ENCODE measurements at regions of chr19 and their contacts with region 1.

Region 1: DNA sequence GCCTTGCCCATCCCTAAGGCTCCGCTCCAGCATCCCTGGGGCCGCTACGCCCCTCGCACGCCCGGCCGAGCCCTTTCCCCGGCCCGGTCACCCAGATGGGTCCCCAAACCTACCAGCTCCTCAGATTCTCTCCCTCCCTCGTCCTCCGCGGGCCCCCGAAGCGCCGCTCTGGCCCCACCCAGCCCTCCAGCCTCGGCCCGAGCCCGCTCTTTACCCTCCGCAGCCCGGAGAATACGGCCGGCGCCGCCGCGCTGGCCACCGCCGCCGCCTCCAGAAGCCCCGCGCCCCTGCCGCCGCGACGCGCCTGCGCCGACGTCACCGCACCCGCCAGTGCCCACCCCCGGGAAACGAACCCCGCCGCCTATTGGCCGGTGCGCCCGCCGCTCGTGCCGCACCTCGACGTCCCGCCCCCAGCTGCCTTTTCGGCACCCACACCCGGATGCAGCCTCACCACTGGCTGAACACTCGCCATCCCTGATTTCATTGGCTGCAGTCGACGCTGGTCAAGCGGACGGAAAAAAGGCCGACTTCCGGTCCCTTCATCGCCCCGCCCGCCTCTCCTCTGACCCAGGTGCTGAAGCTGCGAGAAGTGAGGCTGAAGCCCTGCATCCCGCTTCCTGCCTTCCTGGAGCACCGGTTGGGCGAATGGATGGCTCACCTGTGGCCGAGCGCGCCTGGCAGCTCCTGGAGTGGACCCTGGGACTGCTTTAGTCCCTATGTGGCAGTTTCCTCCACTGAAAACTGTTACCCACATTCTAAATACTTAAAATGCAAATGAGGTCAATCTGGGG is at the start of gene DAPK3:
- DNase-seq: peak; percentile 98
- H3K4me3 ChIP-seq: peak within 1 kb of the TSS; percentile 97
- H3K4me3 Mint-ChIP-seq: peak within 1 kb of the TSS; percentile 78
- H3K27ac Mint-ChIP-seq: peak within 1 kb of the TSS; percentile 79
- H3K4me1 ChIP-seq: peaks cover 28% of the 10 kb centered on the region
- H3K4me1 Mint-ChIP-seq: peaks cover 22% of the 10 kb centered on the region
- H3K27me3 ChIP-seq: no peaks in the 10 kb centered on the region
- H3K27me3 Mint-ChIP-seq: no peaks in the 10 kb centered on the region
- CTCF ChIP-seq: no peak
- total RNA-seq, gene DAPK3: 58.6 and 66.4 TPM in 2 replicates

Region 2: GRCh38 chr19:3762501-3763459 is 208.2 kb before region 1 on chr19 and contains the start of gene MRPL54:
- CTCF ChIA-PET with region 1: no interaction called
- POLR2A ChIA-PET with region 1: interaction called, 20 read pairs
- intact Hi-C with region 1: no loop called
- DNase-seq: peak; percentile 98
- H3K4me3 ChIP-seq: peak within 1 kb of the TSS; percentile 68
- H3K4me3 Mint-ChIP-seq: peak within 1 kb of the TSS; percentile 96
- H3K27ac Mint-ChIP-seq: peak within 1 kb of the TSS; percentile 99
- H3K4me1 ChIP-seq: peaks cover 4% of the 10 kb centered on the region
- H3K4me1 Mint-ChIP-seq: peaks cover 8% of the 10 kb centered on the region
- H3K27me3 ChIP-seq: no peaks in the 10 kb centered on the region
- H3K27me3 Mint-ChIP-seq: no peaks in the 10 kb centered on the region
- CTCF ChIP-seq: no peak
- total RNA-seq, gene MRPL54: 46.4 and 54.5 TPM in 2 replicates

Region 3: DNA sequence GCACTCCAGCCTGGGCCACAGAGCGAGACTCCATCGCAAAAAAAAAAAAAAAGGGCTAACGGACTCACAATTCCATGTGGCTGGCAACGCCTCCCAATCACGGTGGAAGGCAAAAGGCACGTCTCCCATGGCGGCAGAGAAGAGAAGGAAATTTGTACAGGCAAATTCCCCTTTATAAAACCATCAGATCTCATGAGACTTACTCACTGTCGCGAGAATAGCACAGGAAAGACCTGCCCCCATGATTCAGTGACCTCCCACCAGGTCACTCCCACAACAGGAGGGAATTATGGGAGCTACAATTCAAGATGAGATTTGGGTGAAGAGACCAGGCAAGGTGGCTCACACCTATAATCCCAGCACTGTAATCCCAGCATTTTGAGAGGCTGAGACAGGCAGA is 56.8 kb before region 1 on chr19:
- CTCF ChIA-PET with region 1: no interaction called
- POLR2A ChIA-PET with region 1: no interaction called
- intact Hi-C with region 1: no loop called
- DNase-seq: no peak
- H3K4me3 ChIP-seq: no peak overlapping the region
- H3K4me3 Mint-ChIP-seq: no peak overlapping the region
- H3K27ac Mint-ChIP-seq: no peak overlapping the region
- H3K4me1 ChIP-seq: no peaks in the 10 kb centered on the region
- H3K4me1 Mint-ChIP-seq: no peaks in the 10 kb centered on the region
- H3K27me3 ChIP-seq: no peaks in the 10 kb centered on the region
- H3K27me3 Mint-ChIP-seq: peaks cover 3% of the 10 kb centered on the region
- CTCF ChIP-seq: no peak